Naive thymus-derived CD4-positive, alpha-beta T cell (primary cell): ENCODE measurements at regions of chr14 and their contacts with region 1.

Region 1: DNA sequence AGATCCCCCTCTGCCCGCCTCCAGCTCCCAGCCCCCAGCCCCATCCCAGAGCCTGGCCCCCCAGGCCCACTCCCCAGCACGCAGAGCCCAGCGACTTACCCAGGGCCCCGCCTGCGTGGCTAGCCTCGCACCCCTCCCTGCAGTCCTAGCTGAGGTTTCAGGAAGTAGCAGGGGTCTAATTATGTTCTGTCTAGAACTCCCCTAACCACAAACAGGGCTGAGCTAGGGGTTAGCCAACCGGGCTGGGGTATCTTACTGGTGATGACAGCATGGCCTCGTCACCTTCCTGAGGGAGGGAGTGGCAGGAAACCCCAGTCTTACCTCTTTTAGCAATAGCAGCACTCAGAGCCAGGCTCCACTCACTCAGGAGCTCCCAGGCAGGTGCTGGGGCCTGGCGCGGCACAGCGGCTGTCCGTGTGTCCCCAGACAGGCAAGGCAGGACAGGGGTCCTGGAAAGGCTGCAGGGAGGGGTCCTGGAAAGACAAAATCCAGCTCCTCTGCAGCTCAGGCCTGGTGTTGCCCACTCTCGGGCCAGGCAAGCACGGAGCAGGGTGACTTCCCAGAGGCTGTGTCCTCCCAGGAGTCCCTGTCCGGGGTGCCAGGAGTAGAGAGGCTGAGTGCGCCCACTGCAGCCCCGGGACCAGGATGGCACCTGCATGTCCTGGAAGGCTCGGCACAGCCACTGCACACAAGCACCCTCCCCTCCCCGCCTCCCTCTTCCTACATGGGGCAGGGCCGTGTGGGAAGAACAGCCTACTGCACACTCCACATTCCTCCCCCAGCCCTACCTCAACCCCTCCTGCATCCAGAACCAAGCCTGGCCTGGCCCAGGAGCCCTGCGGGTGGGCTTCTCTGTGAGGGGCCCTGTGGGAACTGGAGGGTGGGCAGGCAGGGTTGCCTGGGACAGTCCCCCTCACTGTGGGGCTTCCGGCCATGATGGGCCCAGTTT is at the start of gene GPR132:
- DNase-seq: peak; percentile 73 to 99 (median 96)
- ATAC-seq: peak; percentile 93
- H3K4me3 ChIP-seq: peak within 1 kb of the TSS; percentile 97
- H3K4me3 Mint-ChIP-seq: peak within 1 kb of the TSS; percentile 82 to 96 (median 90)
- H3K27ac ChIP-seq: peak within 1 kb of the TSS; percentile 96
- H3K27ac Mint-ChIP-seq: peak within 1 kb of the TSS; percentile 93 to 99 (median 98)
- H3K4me1 ChIP-seq: peaks cover 66 to 80% of the 10 kb centered on the region in 2 donors
- H3K4me1 Mint-ChIP-seq: peaks cover 36 to 85% (median 58%) of the 10 kb centered on the region in 7 donors
- H3K27me3 ChIP-seq: no peaks in the 10 kb centered on the region
- H3K27me3 Mint-ChIP-seq: no peaks in the 10 kb centered on the region
- total RNA-seq, gene GPR132: 37.8 to 58.7 (median 45.2) TPM

Region 2: GRCh38 chr14:104373055-104373854 is 692.3 kb before region 1 on chr14:
- CTCF ChIA-PET with region 1: no interaction called
- POLR2A ChIA-PET with region 1: no interaction called
- intact Hi-C with region 1: no loop called
- DNase-seq: no peak
- ATAC-seq: no peak
- H3K4me3 ChIP-seq: no peak overlapping the region
- H3K4me3 Mint-ChIP-seq: peak overlapping the region in 1 of 10 donors; percentile 10
- H3K27ac ChIP-seq: no peak overlapping the region
- H3K27ac Mint-ChIP-seq: peak overlapping the region in 1 of 9 donors; percentile 28
- H3K4me1 ChIP-seq: peaks cover 0 to 13% of the 10 kb centered on the region in 2 donors
- H3K4me1 Mint-ChIP-seq: peaks cover 0 to 20% (median 12%) of the 10 kb centered on the region in 7 donors
- H3K27me3 ChIP-seq: no peaks in the 10 kb centered on the region
- H3K27me3 Mint-ChIP-seq: no peaks in the 10 kb centered on the region

Region 3: GRCh38 chr14:104843442-104844305 is 221.9 kb before region 1 on chr14:
- CTCF ChIA-PET with region 1: no interaction called
- POLR2A ChIA-PET with region 1: no interaction called
- intact Hi-C with region 1: no loop called
- DNase-seq: no peak
- ATAC-seq: no peak
- H3K4me3 ChIP-seq: no peak overlapping the region
- H3K4me3 Mint-ChIP-seq: peak overlapping the region in 4 of 10 donors; percentile 15 to 79 (median 22)
- H3K27ac ChIP-seq: no peak overlapping the region
- H3K27ac Mint-ChIP-seq: no peak overlapping the region
- H3K4me1 ChIP-seq: no peaks in the 10 kb centered on the region
- H3K4me1 Mint-ChIP-seq: peaks cover 0 to 13% (median 4%) of the 10 kb centered on the region in 7 donors
- H3K27me3 ChIP-seq: peaks cover 0 to 10% of the 10 kb centered on the region in 2 donors
- H3K27me3 Mint-ChIP-seq: peaks cover 45 to 67% (median 61%) of the 10 kb centered on the region in 5 donors

Region 4: DNA sequence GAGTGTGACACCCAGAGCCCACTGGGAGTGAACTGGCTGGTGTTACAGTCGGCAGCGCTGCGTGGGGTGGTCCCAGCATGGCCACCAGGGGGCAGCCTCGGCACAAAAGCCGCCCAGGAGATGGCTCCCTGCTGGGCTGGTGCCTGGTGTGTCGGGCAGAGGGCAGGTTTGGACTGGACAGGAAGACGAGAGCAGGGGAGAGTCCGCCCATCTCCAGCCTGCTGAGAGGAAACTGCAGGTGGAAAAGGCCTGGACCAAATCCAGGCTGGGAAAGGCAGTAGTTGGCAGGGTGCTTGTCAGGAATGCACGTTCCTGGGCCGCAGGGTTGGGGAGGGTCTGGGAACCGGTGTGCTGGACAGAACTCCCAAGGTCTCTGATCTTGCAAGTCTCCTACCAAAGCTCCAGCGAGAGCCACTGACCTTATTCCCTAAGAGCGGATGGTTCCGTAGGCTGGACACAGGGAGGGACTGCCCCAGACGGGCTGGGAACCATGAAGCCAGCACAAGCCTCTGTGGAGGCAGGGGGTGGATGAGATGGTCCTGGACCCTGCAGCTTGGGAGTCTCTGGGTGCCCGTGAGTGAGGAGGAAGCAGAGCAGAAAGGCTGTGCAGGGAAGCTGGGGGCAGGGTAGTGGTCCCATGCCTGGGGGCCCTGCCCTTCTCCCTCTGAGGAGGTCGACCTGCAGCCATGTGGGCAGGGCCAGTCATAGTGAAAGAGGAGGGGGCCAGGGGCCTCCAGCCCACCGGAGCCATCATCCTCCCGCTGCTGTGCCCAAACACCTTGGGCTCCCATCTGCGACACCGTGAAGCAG is 89.2 kb before region 1 on chr14:
- CTCF ChIA-PET with region 1: interaction called, 5 read pairs
- POLR2A ChIA-PET with region 1: no interaction called
- intact Hi-C with region 1: loop called in 1 of 2 experiments (anchors 5 kb)
- DNase-seq: peak; percentile 67 to 91 (median 83)
- ATAC-seq: peak; percentile 86
- H3K4me3 ChIP-seq: no peak overlapping the region
- H3K4me3 Mint-ChIP-seq: peak overlapping the region; percentile 41 to 92 (median 72)
- H3K27ac ChIP-seq: no peak overlapping the region
- H3K27ac Mint-ChIP-seq: peak overlapping the region in 4 of 9 donors; percentile 3 to 68 (median 33)
- H3K4me1 ChIP-seq: peaks cover 0 to 7% of the 10 kb centered on the region in 2 donors
- H3K4me1 Mint-ChIP-seq: peaks cover 5 to 19% (median 13%) of the 10 kb centered on the region in 7 donors
- H3K27me3 ChIP-seq: peaks cover 0 to 8% of the 10 kb centered on the region in 2 donors
- H3K27me3 Mint-ChIP-seq: peaks cover 8 to 33% (median 16%) of the 10 kb centered on the region in 5 donors

Region 5: DNA sequence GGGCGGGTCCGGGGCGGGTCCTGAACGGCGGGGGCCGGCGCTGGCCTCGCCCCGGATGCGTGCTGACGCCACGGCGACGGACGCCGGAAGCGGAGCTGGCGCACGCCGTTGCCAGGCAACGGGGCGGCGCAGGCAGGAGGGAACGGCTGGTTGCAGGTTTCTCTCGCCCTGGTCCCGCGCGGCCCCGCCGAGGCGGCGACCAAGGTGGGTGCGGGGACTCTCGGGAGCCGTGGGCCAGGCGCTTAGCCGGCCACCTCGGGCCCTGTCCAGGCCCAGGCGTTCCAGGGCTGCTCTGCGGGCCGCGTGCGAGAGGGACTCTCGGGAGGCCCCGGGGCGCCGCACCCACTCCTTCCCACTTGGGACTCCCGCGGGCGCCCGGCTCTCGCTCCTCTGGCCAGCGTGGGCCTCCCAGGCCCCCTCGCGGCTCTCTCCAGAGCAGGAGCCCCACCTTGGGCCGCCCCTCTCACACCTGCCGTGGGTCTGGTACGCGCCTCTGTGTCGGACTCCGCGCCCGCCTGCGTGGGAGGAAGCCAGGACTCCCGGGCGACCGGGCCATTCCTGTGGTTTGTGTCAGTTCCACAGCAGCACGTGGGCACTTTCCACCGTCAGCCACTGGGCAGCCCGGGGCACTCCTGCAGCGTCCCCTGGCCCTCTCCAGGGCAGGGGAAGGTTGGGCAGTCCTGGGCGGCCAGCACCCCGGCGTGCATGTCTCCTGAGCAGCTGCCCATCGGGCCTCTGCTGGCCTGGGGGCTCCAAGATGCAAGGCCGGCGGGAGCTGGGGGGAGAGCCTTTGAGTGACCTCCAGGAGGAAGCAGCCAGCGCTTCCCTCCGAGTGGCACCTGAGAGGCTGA is 79.7 kb before region 1 on chr14 and contains the start of gene CLBA1:
- CTCF ChIA-PET with region 1: interaction called, 4 read pairs
- POLR2A ChIA-PET with region 1: interaction called, 4 read pairs
- intact Hi-C with region 1: loop called in 1 of 2 experiments (anchors 1 kb)
- DNase-seq: peak; percentile 81 to 90 (median 89)
- ATAC-seq: peak; percentile 96
- H3K4me3 ChIP-seq: peak within 1 kb of the TSS; percentile 56
- H3K4me3 Mint-ChIP-seq: peak within 1 kb of the TSS; percentile 64 to 86 (median 76)
- H3K27ac ChIP-seq: peak within 1 kb of the TSS; percentile 72
- H3K27ac Mint-ChIP-seq: peak within 1 kb of the TSS in 8 of 9 donors; percentile 74 to 89 (median 86)
- H3K4me1 ChIP-seq: no peaks in the 10 kb centered on the region
- H3K4me1 Mint-ChIP-seq: peaks cover 0 to 9% (median 4%) of the 10 kb centered on the region in 7 donors
- H3K27me3 ChIP-seq: no peaks in the 10 kb centered on the region
- H3K27me3 Mint-ChIP-seq: peaks cover 0 to 5% (median 4%) of the 10 kb centered on the region in 5 donors
- total RNA-seq, gene CLBA1: 0.51 to 2.1 (median 1.3) TPM

Region 6: GRCh38 chr14:105053996-105054395 is 11.6 kb before region 1 on chr14:
- CTCF ChIA-PET with region 1: interaction called, 4 read pairs
- POLR2A ChIA-PET with region 1: interaction called, 71 read pairs
- intact Hi-C with region 1: no loop called
- DNase-seq: no peak
- ATAC-seq: no peak
- H3K4me3 ChIP-seq: no peak overlapping the region
- H3K4me3 Mint-ChIP-seq: no peak overlapping the region
- H3K27ac ChIP-seq: no peak overlapping the region
- H3K27ac Mint-ChIP-seq: peak overlapping the region in 5 of 9 donors; percentile 32 to 86 (median 41)
- H3K4me1 ChIP-seq: peaks cover 4 to 7% of the 10 kb centered on the region in 2 donors
- H3K4me1 Mint-ChIP-seq: peaks cover 9 to 26% (median 17%) of the 10 kb centered on the region in 7 donors
- H3K27me3 ChIP-seq: no peaks in the 10 kb centered on the region
- H3K27me3 Mint-ChIP-seq: no peaks in the 10 kb centered on the region

Region 7: GRCh38 chr14:105075379-105076295 is 10.1 kb after region 1 on chr14:
- CTCF ChIA-PET with region 1: interaction called, 8 read pairs
- POLR2A ChIA-PET with region 1: interaction called, 71 read pairs
- intact Hi-C with region 1: loop called in 1 of 2 experiments (anchors 1 kb)
- DNase-seq: no peak
- ATAC-seq: peak; percentile 83
- H3K4me3 ChIP-seq: no peak overlapping the region
- H3K4me3 Mint-ChIP-seq: peak overlapping the region in 6 of 10 donors; percentile 13 to 79 (median 44)
- H3K27ac ChIP-seq: no peak overlapping the region
- H3K27ac Mint-ChIP-seq: peak overlapping the region in 3 of 9 donors; percentile 13 to 61 (median 22)
- H3K4me1 ChIP-seq: peaks cover 20 to 29% of the 10 kb centered on the region in 2 donors
- H3K4me1 Mint-ChIP-seq: peaks cover 15 to 41% (median 32%) of the 10 kb centered on the region in 7 donors
- H3K27me3 ChIP-seq: no peaks in the 10 kb centered on the region
- H3K27me3 Mint-ChIP-seq: peaks cover 0 to 11% (median 0%) of the 10 kb centered on the region in 5 donors